ENCODE measurements at regions of chr9 and their contacts with region 1.

Region 1: DNA sequence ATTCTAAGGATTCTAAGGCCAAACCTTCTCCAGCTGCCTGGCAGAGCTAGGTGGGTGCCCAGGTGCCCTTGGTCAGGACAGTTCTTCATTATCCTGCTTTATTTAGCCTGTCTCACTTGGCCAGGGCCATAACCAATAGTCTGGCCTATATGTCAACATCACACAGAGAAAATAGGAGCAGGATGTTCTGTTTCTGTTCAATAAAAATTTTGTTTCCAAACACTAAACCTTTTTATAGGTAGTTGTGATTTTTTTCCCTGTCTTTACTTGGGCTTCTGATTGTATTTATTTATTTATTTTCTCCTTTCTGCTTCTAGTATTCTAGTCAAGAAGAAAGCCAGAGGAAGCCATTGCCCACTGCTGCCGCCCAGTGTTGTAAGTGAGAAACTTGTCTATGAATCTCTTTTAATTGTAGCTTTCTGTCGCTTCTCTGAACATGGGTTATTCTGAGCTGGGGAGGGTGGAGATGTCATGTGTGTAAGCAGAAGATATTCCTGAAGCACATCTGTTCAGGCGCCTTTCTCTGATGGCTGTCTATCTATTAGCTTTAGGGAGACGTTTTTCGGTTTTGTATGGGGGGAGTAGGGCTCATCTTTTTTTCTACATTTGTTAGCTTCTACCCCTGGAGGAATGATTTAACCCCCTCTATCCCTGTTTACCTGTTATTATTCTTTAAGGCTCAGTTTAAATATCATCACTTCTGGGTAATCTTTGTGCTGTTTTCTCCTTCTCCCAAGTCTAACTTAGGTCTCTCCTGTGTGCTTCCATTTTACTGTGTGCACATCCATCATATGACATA is 97.1 kb downstream of the UNC13B start:
- DNase-seq: peak; percentile 78
- ATAC-seq: peak; percentile 81 to 87
- H3K4me3 ChIP-seq: no peak overlapping the region
- H3K27ac ChIP-seq: no peak overlapping the region
- H3K4me1 ChIP-seq: peaks cover 27% of the 10 kb centered on the region
- H3K27me3 ChIP-seq: no peaks in the 10 kb centered on the region
- CTCF ChIP-seq: peak; percentile 68

Region 2: DNA sequence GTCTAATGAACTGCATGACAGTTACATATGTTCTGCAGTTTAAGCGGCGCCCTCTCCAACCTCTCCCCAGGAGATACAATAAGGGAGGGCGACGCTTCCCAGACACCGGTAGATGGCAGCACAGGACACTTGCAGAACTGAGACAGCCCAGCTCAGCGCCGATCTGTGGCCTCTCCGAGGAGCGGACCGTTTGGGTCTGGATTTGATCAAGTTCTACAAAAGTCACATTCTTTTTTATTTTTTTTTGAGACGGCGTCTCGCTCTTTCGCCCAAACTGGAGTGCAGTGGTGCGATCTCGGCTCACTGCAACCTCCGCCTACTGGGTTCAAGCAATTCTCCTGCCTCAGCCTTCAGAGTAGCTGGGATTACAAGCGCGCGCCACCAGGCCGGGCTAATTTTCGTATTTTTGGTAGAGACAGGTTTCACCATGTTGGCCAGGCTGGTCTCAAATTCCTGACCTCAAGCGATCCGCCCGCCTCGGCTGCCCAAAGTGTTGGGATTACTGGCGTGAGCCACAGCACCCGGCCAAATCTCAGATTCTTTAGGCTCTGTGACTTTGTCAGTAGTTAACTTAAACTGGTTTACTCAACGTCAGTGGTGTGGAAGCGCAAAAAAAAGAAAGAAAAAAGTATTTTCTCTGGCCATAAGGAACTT is 141.8 kb before region 1 on chr9:
- intact Hi-C with region 1: loop called (anchors 10 kb)
- DNase-seq: peak; percentile 93
- ATAC-seq: peak; percentile 87 to 89
- H3K4me3 ChIP-seq: peak overlapping the region; percentile 57
- H3K27ac ChIP-seq: peak overlapping the region; percentile 86
- H3K4me1 ChIP-seq: peaks cover 40% of the 10 kb centered on the region
- H3K27me3 ChIP-seq: no peaks in the 10 kb centered on the region
- CTCF ChIP-seq: peak; percentile 94